ENCODE measurements at regions of chr10 and their contacts with region 1.

Region 1: DNA sequence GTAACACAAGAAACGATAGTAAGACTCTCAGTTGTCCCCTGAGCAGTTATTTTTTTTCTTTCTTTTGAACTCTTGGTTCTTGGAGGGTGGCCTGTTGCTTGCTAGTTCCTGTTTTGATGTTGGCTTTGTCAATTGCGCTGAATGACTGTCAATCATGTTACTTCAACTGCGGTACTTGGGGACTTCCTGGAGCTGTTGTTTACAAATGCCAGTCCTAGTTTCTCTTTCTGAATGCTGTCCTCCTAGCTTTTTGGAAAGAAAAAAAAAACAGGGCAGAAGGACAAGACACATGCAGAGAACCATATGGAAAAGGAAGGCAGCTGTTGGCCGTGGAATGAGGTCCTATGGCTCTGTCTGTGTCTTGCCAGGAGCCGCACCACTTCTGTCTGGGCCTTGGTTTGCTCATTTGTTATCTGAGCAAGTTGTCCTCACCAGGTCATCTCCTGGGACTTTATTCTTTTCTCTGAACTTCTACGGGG is 7.0 kb upstream of the PDCD4 start:
- DNase-seq: peak; percentile 65
- H3K4me3 Mint-ChIP-seq: peak overlapping the region; percentile 72
- H3K27ac Mint-ChIP-seq: peak overlapping the region; percentile 95
- H3K4me1 Mint-ChIP-seq: peaks cover 93% of the 10 kb centered on the region
- H3K27me3 Mint-ChIP-seq: no peaks in the 10 kb centered on the region

Region 2: DNA sequence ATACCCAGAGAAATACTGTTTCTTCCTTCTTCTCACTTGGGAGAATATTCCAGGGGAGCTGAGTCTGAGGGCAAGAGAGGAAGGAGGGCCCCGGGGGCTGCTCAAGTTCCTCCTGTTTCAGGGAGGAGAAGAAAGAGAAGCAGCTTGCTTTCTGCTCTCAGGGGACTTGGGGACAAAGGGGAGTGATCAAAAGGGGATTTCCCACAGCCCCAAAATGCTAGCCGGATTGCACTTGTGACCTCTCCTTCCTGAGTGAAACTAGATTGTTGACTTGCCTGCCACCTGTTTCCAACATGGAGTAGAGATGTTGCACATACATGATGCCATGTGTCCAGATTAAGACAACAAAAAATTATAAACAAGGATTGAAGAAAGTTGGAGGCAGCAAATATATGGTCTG is 21.7 kb before region 1 on chr10:
- CTCF ChIA-PET with region 1: no interaction called
- POLR2A ChIA-PET with region 1: interaction called, 3 read pairs
- intact Hi-C with region 1: loop called (anchors 2 kb)
- DNase-seq: peak; percentile 70
- H3K4me3 Mint-ChIP-seq: no peak overlapping the region
- H3K27ac Mint-ChIP-seq: peak overlapping the region; percentile 24
- H3K4me1 Mint-ChIP-seq: peaks cover 25% of the 10 kb centered on the region
- H3K27me3 Mint-ChIP-seq: no peaks in the 10 kb centered on the region

Region 3: DNA sequence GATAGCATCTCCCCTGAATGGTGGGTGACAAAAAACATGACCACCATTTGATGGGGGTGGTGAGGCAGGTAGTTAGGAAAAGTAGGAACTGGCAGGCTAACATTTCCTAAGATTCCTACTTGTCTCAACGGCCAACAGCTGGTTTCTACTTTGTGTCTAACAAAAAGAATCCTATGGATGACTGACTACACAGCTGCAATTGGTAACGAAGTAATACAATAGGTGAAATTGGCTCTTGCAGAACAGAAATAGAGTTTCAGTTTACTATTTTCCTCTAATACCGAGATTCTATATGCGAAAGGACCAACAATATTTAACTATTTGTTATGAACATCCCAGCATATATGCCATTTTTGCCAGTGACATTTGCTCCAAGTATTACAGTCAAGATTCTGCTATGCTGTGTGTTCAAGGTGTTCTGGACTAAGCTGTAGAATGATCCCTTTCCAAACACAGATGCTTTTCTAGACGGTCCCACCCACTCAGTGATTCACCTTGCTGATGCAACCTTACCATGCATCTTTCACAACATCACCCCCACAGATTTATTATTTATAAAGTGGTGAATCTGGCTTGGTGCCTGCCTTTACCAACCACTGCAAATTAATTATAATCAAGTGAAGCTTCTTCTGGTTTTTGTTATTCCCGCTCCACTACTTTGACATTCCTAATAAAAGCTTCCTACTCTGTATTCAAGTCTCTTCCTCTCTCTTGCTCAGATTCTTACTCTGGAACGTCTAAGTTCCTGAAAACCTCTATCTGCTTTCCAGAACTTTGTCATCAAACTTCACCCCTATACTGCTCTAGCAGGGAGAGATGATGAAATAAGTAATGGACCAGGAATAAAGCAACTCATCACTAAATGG is 37.5 kb after region 1 on chr10:
- CTCF ChIA-PET with region 1: interaction called, 5 read pairs
- POLR2A ChIA-PET with region 1: interaction called, 3 read pairs
- intact Hi-C with region 1: loop called (anchors 5 kb)
- DNase-seq: peak; percentile 68
- H3K4me3 Mint-ChIP-seq: peak overlapping the region; percentile 6
- H3K27ac Mint-ChIP-seq: peak overlapping the region; percentile 79
- H3K4me1 Mint-ChIP-seq: peaks cover 40% of the 10 kb centered on the region
- H3K27me3 Mint-ChIP-seq: no peaks in the 10 kb centered on the region

Region 4: GRCh38 chr10:110967645-110968044 is 102.9 kb after region 1 on chr10:
- CTCF ChIA-PET with region 1: no interaction called
- POLR2A ChIA-PET with region 1: no interaction called
- intact Hi-C with region 1: no loop called
- DNase-seq: no peak
- H3K4me3 Mint-ChIP-seq: no peak overlapping the region
- H3K27ac Mint-ChIP-seq: no peak overlapping the region
- H3K4me1 Mint-ChIP-seq: peaks cover 59% of the 10 kb centered on the region
- H3K27me3 Mint-ChIP-seq: no peaks in the 10 kb centered on the region

Region 5: DNA sequence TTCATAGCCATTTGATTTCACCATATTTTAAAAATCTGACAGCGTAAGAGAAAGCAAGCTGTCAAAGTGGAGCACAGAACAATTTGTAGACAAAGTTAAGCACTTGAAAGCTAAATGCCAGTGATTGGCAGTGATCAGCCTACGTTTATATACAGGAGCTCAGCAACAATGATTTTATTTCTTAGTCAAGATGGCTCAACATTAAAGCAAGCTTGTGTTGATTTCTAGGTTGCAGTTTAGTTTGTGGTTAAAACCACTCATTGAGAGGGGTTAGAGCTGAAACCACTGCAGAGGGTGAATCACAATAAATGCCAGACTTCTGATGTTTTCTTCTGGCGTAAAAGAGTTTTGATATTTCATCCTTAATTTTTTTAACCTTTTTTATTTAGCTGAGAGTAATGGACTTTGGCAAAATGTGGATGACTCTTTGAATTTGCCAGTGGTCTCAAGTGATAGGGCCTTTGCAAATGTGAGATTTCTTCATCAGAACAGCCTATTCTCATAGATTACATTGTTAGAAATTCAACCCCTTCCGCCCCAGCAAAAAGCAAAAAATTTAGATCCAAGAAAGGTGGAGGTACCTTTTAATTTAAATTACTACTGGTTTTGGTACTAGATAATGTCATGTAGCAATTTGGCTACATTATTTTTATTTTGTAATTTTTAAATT is 128.5 kb after region 1 on chr10:
- CTCF ChIA-PET with region 1: no interaction called
- POLR2A ChIA-PET with region 1: no interaction called
- intact Hi-C with region 1: loop called (anchors 5 kb)
- DNase-seq: no peak
- H3K4me3 Mint-ChIP-seq: no peak overlapping the region
- H3K27ac Mint-ChIP-seq: no peak overlapping the region
- H3K4me1 Mint-ChIP-seq: peaks cover 28% of the 10 kb centered on the region
- H3K27me3 Mint-ChIP-seq: no peaks in the 10 kb centered on the region

Measured in activated CD4-positive, alpha-beta memory T cell treated with anti-CD3 and anti-CD28 coated beads for 36 hours (primary cell).